Activated CD4-positive, alpha-beta memory T cell treated with anti-CD3 and anti-CD28 coated beads for 36 hours (primary cell): ENCODE measurements at regions of chr12 and their contacts with region 1.

Region 1: GRCh38 chr12:4148418-4149056 is 125.0 kb upstream of the CCND2 start:
- DNase-seq: peak; percentile 72
- H3K4me3 Mint-ChIP-seq: no peak overlapping the region
- H3K27ac Mint-ChIP-seq: peak overlapping the region; percentile 53
- H3K4me1 Mint-ChIP-seq: peaks cover 86% of the 10 kb centered on the region
- H3K27me3 Mint-ChIP-seq: no peaks in the 10 kb centered on the region

Region 2: GRCh38 chr12:4107436-4107878 is 41.1 kb before region 1 on chr12:
- CTCF ChIA-PET with region 1: interaction called, 34 read pairs
- POLR2A ChIA-PET with region 1: interaction called, 9 read pairs
- intact Hi-C with region 1: no loop called
- DNase-seq: peak; percentile 80
- H3K4me3 Mint-ChIP-seq: peak overlapping the region; percentile 17
- H3K27ac Mint-ChIP-seq: peak overlapping the region; percentile 75
- H3K4me1 Mint-ChIP-seq: peaks cover 40% of the 10 kb centered on the region
- H3K27me3 Mint-ChIP-seq: peaks cover 8% of the 10 kb centered on the region

Region 3: DNA sequence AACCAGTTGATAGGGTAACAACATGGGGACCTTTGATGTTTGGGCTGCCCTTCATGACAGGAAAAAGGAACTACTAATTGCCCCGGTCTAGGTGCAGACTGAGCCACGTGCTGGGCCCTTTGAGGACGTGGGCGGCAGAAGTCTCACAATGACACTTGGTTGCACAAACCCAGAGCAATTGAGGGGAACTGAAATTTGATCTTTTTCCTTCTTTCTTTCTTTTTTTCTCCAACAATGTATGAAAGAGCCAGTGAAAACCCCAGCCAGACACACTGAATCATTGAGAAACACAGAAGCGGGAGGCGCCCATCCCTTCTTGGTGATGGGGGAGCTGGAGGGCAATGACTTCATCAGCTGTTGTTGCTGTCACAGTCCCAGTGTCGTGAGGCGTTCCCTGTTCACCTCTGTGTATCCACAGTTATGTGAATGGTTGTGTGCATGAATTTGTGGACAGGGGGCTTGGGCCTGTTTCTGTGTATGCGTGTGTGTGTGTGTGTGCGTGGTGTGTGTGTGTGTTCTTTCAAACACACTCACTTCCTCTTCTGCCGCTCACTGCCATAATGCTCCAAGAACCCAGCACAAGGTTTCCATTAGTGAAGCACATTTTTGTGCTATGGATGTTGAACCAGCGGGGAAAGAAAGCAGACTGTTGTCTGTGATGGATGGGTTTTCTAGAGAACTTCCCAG is 12.5 kb before region 1 on chr12:
- CTCF ChIA-PET with region 1: interaction called, 33 read pairs
- POLR2A ChIA-PET with region 1: interaction called, 13 read pairs
- intact Hi-C with region 1: loop called (anchors 1 kb)
- DNase-seq: peak; percentile 91
- H3K4me3 Mint-ChIP-seq: peak overlapping the region; percentile 13
- H3K27ac Mint-ChIP-seq: peak overlapping the region; percentile 89
- H3K4me1 Mint-ChIP-seq: peaks cover 52% of the 10 kb centered on the region
- H3K27me3 Mint-ChIP-seq: no peaks in the 10 kb centered on the region

Region 4: GRCh38 chr12:4169959-4170358 is 21.4 kb after region 1 on chr12:
- CTCF ChIA-PET with region 1: interaction called, 21 read pairs
- POLR2A ChIA-PET with region 1: interaction called, 14 read pairs
- intact Hi-C with region 1: loop called (anchors 1 kb)
- DNase-seq: peak; percentile 72
- H3K4me3 Mint-ChIP-seq: no peak overlapping the region
- H3K27ac Mint-ChIP-seq: peak overlapping the region; percentile 47
- H3K4me1 Mint-ChIP-seq: peaks cover 39% of the 10 kb centered on the region
- H3K27me3 Mint-ChIP-seq: peaks cover 2% of the 10 kb centered on the region

Region 5: DNA sequence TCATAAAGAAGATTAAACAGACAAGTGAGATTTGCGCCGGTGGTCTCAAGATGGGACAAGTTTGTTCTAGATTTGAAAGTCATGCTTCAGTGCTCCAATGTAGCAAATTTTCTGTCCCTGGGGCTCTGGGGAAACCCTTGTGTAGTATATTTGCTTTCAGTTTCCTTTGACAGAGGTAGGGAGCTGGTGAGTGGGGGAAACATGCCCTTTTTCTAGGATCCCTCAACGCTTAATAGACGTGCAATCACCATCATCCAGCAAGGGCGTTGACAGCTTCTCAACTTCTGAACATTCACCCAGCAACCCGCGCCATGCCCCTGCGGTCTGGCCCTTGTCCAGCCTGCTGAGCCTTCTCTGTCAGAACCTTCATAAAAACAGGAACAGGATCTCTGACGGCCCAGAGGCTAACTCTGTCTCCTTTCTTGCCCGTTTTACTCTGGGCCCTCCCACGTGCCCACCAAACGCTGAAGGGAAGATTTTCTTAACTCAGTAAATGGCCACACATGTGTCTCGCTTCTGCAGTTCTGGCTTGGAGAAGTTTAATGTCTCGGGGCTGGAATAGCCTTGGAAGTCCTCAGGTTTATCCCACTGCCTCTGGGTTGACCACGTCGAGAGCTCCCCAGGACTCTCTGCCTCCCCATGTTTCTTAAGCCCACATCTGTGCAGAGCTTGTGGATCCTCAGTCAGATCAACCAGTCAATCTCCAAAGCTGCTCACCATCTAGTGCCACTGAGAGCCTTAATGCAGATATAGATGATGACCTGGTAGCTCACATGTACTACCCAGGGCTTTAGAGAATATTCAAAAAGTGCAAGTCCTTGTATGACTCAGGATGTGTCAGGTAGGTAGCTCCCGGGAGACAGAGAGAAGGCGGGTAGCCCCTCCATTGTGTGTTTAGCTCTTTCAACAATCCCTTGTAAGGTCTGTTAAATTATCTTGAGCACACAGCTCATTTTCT is 67.0 kb after region 1 on chr12:
- CTCF ChIA-PET with region 1: interaction called, 8 read pairs
- POLR2A ChIA-PET with region 1: interaction called, 13 read pairs
- intact Hi-C with region 1: loop called (anchors 1 kb)
- DNase-seq: peak; percentile 70
- H3K4me3 Mint-ChIP-seq: peak overlapping the region; percentile 59
- H3K27ac Mint-ChIP-seq: peak overlapping the region; percentile 86
- H3K4me1 Mint-ChIP-seq: peaks cover 36% of the 10 kb centered on the region
- H3K27me3 Mint-ChIP-seq: no peaks in the 10 kb centered on the region

Region 6: GRCh38 chr12:4506870-4507269 is 358.3 kb after region 1 on chr12:
- CTCF ChIA-PET with region 1: no interaction called
- POLR2A ChIA-PET with region 1: no interaction called
- intact Hi-C with region 1: loop called (anchors 10 kb)
- DNase-seq: no peak
- H3K4me3 Mint-ChIP-seq: no peak overlapping the region
- H3K27ac Mint-ChIP-seq: peak overlapping the region; percentile 2
- H3K4me1 Mint-ChIP-seq: peaks cover 22% of the 10 kb centered on the region
- H3K27me3 Mint-ChIP-seq: no peaks in the 10 kb centered on the region